Pancreas (tissue), 10 donors: ENCODE measurements at regions of chr3 and their contacts with region 1.

Region 1: GRCh38 chr3:13091898-13092611 is 18.8 kb upstream of the IQSEC1 start:
- DNase-seq: peak; percentile 86 to 97 (median 94)
- ATAC-seq: peak; percentile 91 to 96 (median 92)
- H3K4me3 ChIP-seq: peak overlapping the region in 1 of 4 donors; percentile 19
- H3K27ac ChIP-seq: peak overlapping the region in 1 of 4 donors; percentile 25
- H3K4me1 ChIP-seq: peaks cover 0 to 6% (median 0%) of the 10 kb centered on the region in 3 donors
- H3K27me3 ChIP-seq: no peaks in the 10 kb centered on the region
- CTCF ChIP-seq: peak; percentile 91 to 97 (median 96)

Region 2: DNA sequence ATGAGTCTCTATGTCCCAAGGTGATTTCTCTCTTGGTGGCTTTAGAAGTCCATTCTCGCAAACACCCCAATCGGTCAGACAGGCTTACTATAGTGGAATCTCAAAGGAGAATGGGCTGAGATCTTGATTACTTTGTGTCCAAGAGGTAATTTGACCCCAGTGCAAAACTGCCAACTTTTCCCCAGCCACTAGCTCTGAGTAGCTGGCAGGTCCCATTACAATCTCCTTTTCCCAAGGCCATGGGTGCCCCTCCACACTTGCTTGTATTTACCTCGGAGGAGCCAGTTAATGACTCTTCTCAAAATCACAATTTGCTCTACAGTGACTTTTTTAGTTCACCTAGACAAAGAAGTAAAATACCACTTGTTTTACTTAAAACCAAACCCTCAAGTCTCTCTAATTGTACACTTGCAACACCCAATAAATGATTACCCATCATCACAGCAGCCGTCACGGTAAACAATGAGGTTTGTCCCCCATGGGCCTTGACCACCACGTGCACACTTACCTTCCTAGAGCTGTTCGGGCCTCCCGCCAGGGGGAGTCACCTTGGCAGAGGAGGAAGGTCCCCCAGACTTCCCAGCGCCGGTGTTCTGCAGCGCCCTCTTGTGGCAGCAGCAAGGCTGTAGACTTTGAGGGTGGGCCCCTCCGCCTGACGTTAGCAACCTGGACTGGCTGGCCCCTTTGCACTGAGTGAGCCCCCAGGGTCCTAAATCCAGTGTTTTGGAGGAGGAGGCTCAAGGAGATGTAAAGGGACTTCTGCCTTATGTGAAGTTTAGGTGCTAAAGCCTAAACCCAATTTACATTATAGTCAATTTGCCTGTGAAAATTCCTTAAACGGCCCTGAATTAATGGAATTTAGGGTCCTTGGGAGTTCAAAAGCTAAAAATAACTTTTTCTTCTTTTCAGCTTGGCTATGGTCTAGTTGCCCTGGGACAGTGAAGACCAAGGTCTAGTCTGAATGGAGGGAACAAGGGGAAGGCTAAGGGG is 369.4 kb after region 1 on chr3:
- intact Hi-C with region 1: loop called in 2 of 3 experiments (anchors 5 to 10 kb)
- DNase-seq: peak; percentile 51 to 82 (median 74)
- ATAC-seq: peak; percentile 70 to 93 (median 79)
- H3K4me3 ChIP-seq: no peak overlapping the region
- H3K27ac ChIP-seq: no peak overlapping the region
- H3K4me1 ChIP-seq: peaks cover 0 to 5% (median 0%) of the 10 kb centered on the region in 3 donors
- H3K27me3 ChIP-seq: no peaks in the 10 kb centered on the region
- CTCF ChIP-seq: peak; percentile 17 to 48 (median 35)

Region 3: GRCh38 chr3:13648060-13649001 is 556.3 kb after region 1 on chr3:
- intact Hi-C with region 1: loop called in 2 of 3 experiments (anchors 5 to 10 kb)
- DNase-seq: peak; percentile 67 to 95 (median 86)
- ATAC-seq: peak; percentile 82 to 88 (median 86)
- H3K4me3 ChIP-seq: no peak overlapping the region
- H3K27ac ChIP-seq: no peak overlapping the region
- H3K4me1 ChIP-seq: no peaks in the 10 kb centered on the region
- H3K27me3 ChIP-seq: no peaks in the 10 kb centered on the region
- CTCF ChIP-seq: peak; percentile 95 to 99 (median 96)